ENCODE measurements at regions of chr17 and their contacts with region 1.

Region 1: DNA sequence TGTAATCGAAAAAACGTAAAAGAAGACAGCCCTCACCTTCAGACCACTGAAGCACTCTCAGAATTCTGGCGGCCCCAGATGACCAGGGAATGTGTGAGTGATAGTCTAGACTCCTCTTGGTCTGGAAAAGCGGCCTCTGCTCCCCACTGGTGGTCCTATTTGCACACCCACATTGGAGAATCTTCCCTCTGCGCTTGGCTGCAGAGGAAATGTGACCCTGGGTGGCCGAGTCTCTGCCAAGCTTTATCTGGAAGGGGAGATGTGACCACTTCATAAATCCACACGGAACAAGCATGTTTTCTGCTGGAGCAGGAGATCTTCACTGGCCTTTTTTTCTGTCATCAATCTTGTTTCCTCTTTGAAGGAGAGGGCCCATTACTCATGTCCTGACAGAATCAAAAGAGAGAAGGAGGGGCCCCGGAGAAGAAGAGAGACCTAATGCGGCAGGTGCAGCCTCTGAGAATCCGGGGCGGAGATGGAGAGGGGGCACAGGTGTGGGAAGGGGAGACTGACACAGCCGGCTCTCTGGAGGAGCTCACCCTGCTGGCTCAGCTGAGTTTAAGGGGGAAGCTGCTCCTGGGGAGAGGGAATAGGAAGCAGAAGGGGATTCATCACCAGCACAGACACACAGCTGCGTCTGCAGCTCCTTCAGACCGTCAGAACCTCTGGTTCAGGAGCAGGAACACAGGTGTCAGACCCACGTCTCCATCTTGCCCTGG is 116.3 kb downstream of the SOX9 start:
- DNase-seq: no peak
- ATAC-seq: 0 out of 2 replicates have a peak, but pooled peaks have one; percentile 7
- H3K4me3 ChIP-seq: no peak overlapping the region
- H3K27ac ChIP-seq: peak overlapping the region; percentile 15; the same call in 1 of the 2 replicates
- H3K4me1 ChIP-seq: peaks cover 7% of the 10 kb centered on the region; the same call in 1 of the 2 replicates
- H3K27me3 ChIP-seq: no peaks in the 10 kb centered on the region
- CTCF ChIP-seq: no peak

Region 2: DNA sequence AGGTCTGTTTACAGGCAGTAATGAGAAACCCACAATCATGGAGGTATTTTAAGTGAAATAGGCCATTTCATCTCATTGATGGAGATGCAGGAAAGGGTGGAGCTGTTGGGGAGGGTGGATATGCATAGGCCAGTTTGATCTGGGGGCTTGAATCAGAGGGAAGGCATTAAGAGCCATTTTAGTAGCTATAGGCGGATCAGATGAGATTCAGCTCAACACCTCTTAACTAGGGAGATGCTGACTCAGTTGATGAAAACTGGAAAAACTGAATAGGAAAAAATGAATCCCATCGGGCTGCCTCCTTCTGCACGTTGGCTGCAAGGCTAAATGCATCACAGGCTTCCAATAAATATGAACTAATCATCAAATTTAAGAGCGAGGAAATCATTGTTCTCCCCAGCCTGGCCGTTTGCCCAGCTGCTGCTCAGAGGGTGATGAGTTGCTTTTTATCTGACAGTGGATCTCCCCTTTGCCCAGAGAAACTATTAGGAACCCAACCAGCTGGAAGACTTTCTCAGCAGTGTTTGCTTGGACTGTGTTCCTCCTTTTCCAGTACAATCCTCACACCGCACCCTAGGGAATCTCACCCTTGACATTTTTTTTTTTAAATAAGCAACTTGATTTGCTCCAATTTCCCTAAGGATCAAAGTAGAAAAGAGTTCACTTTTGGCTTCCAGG is 33.3 kb after region 1 on chr17:
- CTCF ChIA-PET with region 1: no interaction called
- POLR2A ChIA-PET with region 1: interaction called, 10 read pairs
- in situ Hi-C with region 1: no loop called
- intact Hi-C with region 1: no loop called
- DNase-seq: peak; percentile 7
- ATAC-seq: peak; percentile 58; the same call in 1 of the 2 replicates
- H3K4me3 ChIP-seq: no peak overlapping the region
- H3K27ac ChIP-seq: no peak overlapping the region
- H3K4me1 ChIP-seq: 0 out of 2 replicates have a peak, but pooled peaks cover 3% of the 10 kb centered on the region
- H3K27me3 ChIP-seq: no peaks in the 10 kb centered on the region
- CTCF ChIP-seq: no peak

Region 3: GRCh38 chr17:72306037-72306436 is 69.0 kb after region 1 on chr17:
- CTCF ChIA-PET with region 1: no interaction called
- POLR2A ChIA-PET with region 1: no interaction called
- in situ Hi-C with region 1: no loop called
- intact Hi-C with region 1: no loop called
- DNase-seq: no peak
- ATAC-seq: no peak
- H3K4me3 ChIP-seq: no peak overlapping the region
- H3K27ac ChIP-seq: no peak overlapping the region
- H3K4me1 ChIP-seq: peaks cover 5% of the 10 kb centered on the region; the same call in 1 of the 2 replicates
- H3K27me3 ChIP-seq: no peaks in the 10 kb centered on the region
- CTCF ChIP-seq: no peak